Heart right ventricle (tissue), 16 donors: ENCODE measurements at regions of chr19 and their contacts with region 1.

Region 1: GRCh38 chr19:39065928-39066327 is 18.2 kb upstream of the ACP7 start:
- DNase-seq: no peak
- ATAC-seq: no peak
- H3K4me3 ChIP-seq: no peak overlapping the region
- H3K27ac ChIP-seq: no peak overlapping the region
- H3K4me1 ChIP-seq: no peaks in the 10 kb centered on the region
- H3K27me3 ChIP-seq: peaks cover 0 to 27% (median 11%) of the 10 kb centered on the region in 7 donors
- CTCF ChIP-seq: no peak

Region 2: GRCh38 chr19:39293394-39293793 is 227.5 kb after region 1 on chr19:
- intact Hi-C with region 1: loop called in 1 of 10 experiments (anchors 5 kb)
- DNase-seq: no peak
- ATAC-seq: no peak
- H3K4me3 ChIP-seq: no peak overlapping the region
- H3K27ac ChIP-seq: no peak overlapping the region
- H3K4me1 ChIP-seq: no peaks in the 10 kb centered on the region
- H3K27me3 ChIP-seq: peaks cover 0 to 69% (median 43%) of the 10 kb centered on the region in 7 donors
- CTCF ChIP-seq: no peak